H1 (cell line): ENCODE measurements at regions of chr9 and their contacts with region 1.

Region 1: GRCh38 chr9:71490810-71491209 is 277.5 kb downstream of the CEMIP2 start:
- DNase-seq: no peak
- H3K4me3 ChIP-seq: no peak overlapping the region
- H3K27ac ChIP-seq: no peak overlapping the region
- H3K4me1 ChIP-seq: no peaks in the 10 kb centered on the region
- H3K27me3 ChIP-seq: no peaks in the 10 kb centered on the region
- CTCF ChIP-seq: peak in 2 of 3 experiments; percentile 24 to 53; a peak in 2 of 4 replicates
- EP300 ChIP-seq: no peak
- POLR2A ChIP-seq: no peak
- RAD21 ChIP-seq: peak; percentile 58 to 68

Region 2: DNA sequence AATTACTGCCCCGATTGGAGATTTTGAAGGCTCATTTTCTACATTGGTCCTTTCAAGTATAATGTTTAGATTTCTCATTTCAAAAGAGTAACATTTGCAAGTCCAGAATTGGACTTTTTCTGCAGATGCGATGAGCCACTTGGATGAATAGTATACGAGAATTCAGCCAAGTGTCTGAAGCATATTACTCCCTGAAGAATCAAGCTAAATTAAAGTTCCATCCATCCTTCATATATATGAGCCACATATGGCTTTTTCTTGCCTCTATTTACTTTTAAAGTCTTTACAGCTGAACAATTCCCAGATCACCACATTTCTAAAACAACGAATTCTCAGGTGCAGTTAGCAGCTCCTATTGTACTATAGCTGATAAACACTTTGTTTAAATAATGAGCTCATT is 11.2 kb before region 1 on chr9:
- CTCF ChIA-PET with region 1: interaction called, 24 read pairs
- POLR2A ChIA-PET with region 1: no interaction called
- DNase-seq: no peak
- H3K4me3 ChIP-seq: no peak overlapping the region
- H3K27ac ChIP-seq: no peak overlapping the region
- H3K4me1 ChIP-seq: no peaks in the 10 kb centered on the region
- H3K27me3 ChIP-seq: no peaks in the 10 kb centered on the region
- CTCF ChIP-seq: no peak
- EP300 ChIP-seq: no peak
- POLR2A ChIP-seq: no peak
- RAD21 ChIP-seq: no peak

Region 3: GRCh38 chr9:71628247-71628646 is 137.4 kb after region 1 on chr9:
- CTCF ChIA-PET with region 1: no interaction called
- POLR2A ChIA-PET with region 1: no interaction called
- DNase-seq: no peak
- H3K4me3 ChIP-seq: no peak overlapping the region
- H3K27ac ChIP-seq: no peak overlapping the region
- H3K4me1 ChIP-seq: no peaks in the 10 kb centered on the region; a peak in 1 of 7 replicates
- H3K27me3 ChIP-seq: no peaks in the 10 kb centered on the region; a peak in 1 of 7 replicates
- CTCF ChIP-seq: peak in 2 of 3 experiments; percentile 49 to 60; a peak in 3 of 4 replicates
- EP300 ChIP-seq: no peak
- POLR2A ChIP-seq: no peak
- RAD21 ChIP-seq: peak; percentile 65 to 72

Region 4: GRCh38 chr9:71819115-71819739 is 328.4 kb after region 1 on chr9:
- CTCF ChIA-PET with region 1: no interaction called
- POLR2A ChIA-PET with region 1: no interaction called
- DNase-seq: no peak
- H3K4me3 ChIP-seq: no peak overlapping the region
- H3K27ac ChIP-seq: no peak overlapping the region
- H3K4me1 ChIP-seq: peaks cover 0 to 8% (median 1%) of the 10 kb centered on the region in 4 experiments; a peak in 3 of 7 replicates
- H3K27me3 ChIP-seq: no peaks in the 10 kb centered on the region
- CTCF ChIP-seq: peak in 2 of 3 experiments; percentile 27 to 46; a peak in 2 of 4 replicates
- EP300 ChIP-seq: no peak
- POLR2A ChIP-seq: no peak
- RAD21 ChIP-seq: peak; percentile 50 to 53